Activated naive CD4-positive, alpha-beta T cell treated with anti-CD3 and anti-CD28 coated beads for 36 hours (primary cell): ENCODE measurements at regions of chr4 and their contacts with region 1.

Region 1: GRCh38 chr4:150518559-150518958 is 63.4 kb upstream of the MAB21L2 start:
- DNase-seq: no peak
- H3K4me3 Mint-ChIP-seq: no peak overlapping the region
- H3K27ac Mint-ChIP-seq: no peak overlapping the region
- H3K4me1 Mint-ChIP-seq: peaks cover 17% of the 10 kb centered on the region
- H3K27me3 Mint-ChIP-seq: no peaks in the 10 kb centered on the region

Region 2: DNA sequence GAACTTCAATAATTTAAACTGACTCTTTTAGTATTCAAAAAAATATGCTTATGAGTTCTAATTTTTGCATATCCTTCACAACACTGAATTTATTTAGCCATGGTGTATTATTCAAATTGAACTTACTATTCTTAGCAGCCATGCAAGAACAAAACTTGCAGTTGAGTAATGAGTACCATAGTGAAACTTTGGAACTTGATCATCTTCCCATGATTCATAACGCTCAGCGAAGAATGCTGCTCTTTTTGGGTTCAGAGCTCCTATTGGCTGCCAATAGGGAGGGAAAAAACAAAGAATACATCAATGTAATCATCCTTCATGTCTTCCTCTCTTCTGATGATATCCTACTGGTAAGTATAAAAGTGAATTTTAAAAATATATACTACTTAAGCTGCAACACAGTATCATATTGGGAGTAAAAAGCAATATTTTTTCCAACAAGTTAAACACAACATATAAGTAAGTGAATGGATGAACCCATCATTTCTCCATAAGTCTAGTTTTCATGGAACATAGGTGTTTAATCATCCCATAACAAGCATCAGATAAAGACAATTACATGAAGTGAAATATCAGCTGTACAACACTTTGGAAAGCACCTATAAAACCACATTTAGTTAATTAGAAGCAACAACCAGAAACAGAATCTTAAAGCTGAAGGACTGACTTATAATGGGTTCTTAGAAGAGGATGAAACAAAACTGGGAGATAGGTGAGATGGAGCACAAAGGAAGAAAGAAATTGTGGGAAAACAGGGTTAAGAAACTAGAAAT is 81.8 kb before region 1 on chr4:
- CTCF ChIA-PET with region 1: no interaction called
- intact Hi-C with region 1: loop called (anchors 1 kb)
- DNase-seq: peak; percentile 42
- H3K4me3 Mint-ChIP-seq: no peak overlapping the region
- H3K27ac Mint-ChIP-seq: peak overlapping the region; percentile 66
- H3K4me1 Mint-ChIP-seq: peaks cover 15% of the 10 kb centered on the region
- H3K27me3 Mint-ChIP-seq: no peaks in the 10 kb centered on the region

Region 3: DNA sequence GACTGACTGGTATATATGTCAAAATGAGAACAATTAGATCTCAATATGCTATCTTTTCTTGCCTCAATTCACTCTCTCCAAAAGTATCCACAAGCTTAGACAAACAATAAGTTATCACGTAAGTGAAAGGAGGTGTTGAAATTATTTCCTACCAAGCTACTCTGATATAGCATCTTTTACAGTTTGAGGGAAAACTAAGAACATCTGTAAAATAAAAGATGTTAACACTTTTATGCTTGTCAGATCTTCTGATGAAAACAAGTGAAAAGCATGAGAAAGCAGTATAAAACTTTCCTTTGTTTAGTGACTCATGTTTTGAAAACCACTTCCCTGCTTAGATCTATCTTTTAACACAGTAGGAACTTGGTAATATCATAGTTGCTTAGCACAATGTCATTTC is 55.0 kb after region 1 on chr4:
- CTCF ChIA-PET with region 1: no interaction called
- intact Hi-C with region 1: loop called (anchors 2 kb)
- DNase-seq: no peak
- H3K4me3 Mint-ChIP-seq: no peak overlapping the region
- H3K27ac Mint-ChIP-seq: no peak overlapping the region
- H3K4me1 Mint-ChIP-seq: peaks cover 3% of the 10 kb centered on the region
- H3K27me3 Mint-ChIP-seq: no peaks in the 10 kb centered on the region